ENCODE measurements at regions of chr9 and their contacts with region 1.

Region 1: GRCh38 chr9:89815903-89816573 is 211.2 kb downstream of the GADD45G start:
- DNase-seq: peak; percentile 92
- ATAC-seq: peak; percentile 96
- H3K4me3 ChIP-seq: no peak overlapping the region
- H3K4me3 Mint-ChIP-seq: peak overlapping the region; percentile 43
- H3K27ac ChIP-seq: peak overlapping the region; percentile 75 to 84
- H3K27ac Mint-ChIP-seq: peak overlapping the region; percentile 79
- H3K4me1 ChIP-seq: peaks cover 36 to 39% of the 10 kb centered on the region in 2 donors
- H3K4me1 Mint-ChIP-seq: peaks cover 52% of the 10 kb centered on the region
- H3K27me3 ChIP-seq: no peaks in the 10 kb centered on the region
- H3K27me3 Mint-ChIP-seq: no peaks in the 10 kb centered on the region
- CTCF ChIP-seq: no peak

Region 2: DNA sequence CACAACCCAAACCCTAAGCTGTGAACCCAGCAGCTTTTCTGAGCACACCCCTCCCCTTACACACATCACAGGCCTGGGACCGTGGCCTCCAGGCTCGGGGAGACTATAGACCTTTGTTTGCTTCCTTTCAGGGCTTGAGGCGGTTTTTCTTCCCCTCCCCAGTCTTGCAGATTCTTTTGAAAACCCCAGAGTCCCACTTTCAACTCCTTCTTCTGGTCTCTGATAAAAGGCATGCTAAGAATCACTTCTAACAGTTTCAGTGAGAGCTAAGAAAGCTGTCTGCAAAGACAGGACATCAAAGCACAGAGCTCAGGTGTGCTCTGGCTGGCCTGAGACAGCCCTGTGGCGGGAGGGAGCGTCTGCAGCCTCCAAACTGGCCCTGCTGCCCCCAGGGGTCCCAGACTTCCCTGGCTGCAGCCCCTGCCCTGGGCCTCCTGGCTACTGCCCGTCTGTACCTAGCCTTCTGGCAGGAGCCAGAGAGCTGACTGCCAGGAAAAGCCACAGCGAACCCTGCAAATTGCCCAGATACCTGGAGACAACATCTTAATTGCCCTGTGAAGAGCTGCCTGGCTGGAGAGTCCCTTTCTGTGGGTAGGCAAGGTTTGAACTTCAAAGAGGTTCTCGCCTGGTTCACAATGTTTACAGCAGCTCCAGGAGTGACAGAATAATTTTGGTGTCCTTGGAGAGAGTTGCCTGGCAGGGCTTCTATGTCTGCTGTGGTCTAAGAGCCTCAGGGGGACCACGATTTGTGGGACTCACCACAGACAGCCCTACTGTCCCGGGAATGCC is 72.3 kb before region 1 on chr9:
- CTCF ChIA-PET with region 1: interaction called, 3 read pairs
- POLR2A ChIA-PET with region 1: no interaction called
- intact Hi-C with region 1: loop called (anchors 10 kb)
- DNase-seq: no peak
- ATAC-seq: no peak
- H3K4me3 ChIP-seq: no peak overlapping the region
- H3K4me3 Mint-ChIP-seq: no peak overlapping the region
- H3K27ac ChIP-seq: peak overlapping the region; percentile 33 to 62
- H3K27ac Mint-ChIP-seq: peak overlapping the region; percentile 50
- H3K4me1 ChIP-seq: peaks cover 44 to 61% of the 10 kb centered on the region in 2 donors
- H3K4me1 Mint-ChIP-seq: peaks cover 59% of the 10 kb centered on the region
- H3K27me3 ChIP-seq: no peaks in the 10 kb centered on the region
- H3K27me3 Mint-ChIP-seq: no peaks in the 10 kb centered on the region
- CTCF ChIP-seq: no peak

Region 3: GRCh38 chr9:89781838-89782517 is 34.1 kb before region 1 on chr9:
- CTCF ChIA-PET with region 1: no interaction called
- POLR2A ChIA-PET with region 1: no interaction called
- intact Hi-C with region 1: loop called (anchors 5 kb)
- DNase-seq: peak; percentile 75
- ATAC-seq: peak; percentile 95
- H3K4me3 ChIP-seq: no peak overlapping the region
- H3K4me3 Mint-ChIP-seq: peak overlapping the region; percentile 18
- H3K27ac ChIP-seq: no peak overlapping the region
- H3K27ac Mint-ChIP-seq: peak overlapping the region; percentile 54
- H3K4me1 ChIP-seq: peaks cover 15 to 16% of the 10 kb centered on the region in 2 donors
- H3K4me1 Mint-ChIP-seq: peaks cover 20% of the 10 kb centered on the region
- H3K27me3 ChIP-seq: no peaks in the 10 kb centered on the region
- H3K27me3 Mint-ChIP-seq: no peaks in the 10 kb centered on the region
- CTCF ChIP-seq: no peak

Measured in B cell (primary cell).